Activated naive CD4-positive, alpha-beta T cell treated with anti-CD3 and anti-CD28 coated beads for 36 hours (primary cell): ENCODE measurements at regions of chr19 and their contacts with region 1.

Region 1: GRCh38 chr19:21396893-21397572 is at the start of gene ZNF493:
- DNase-seq: peak; percentile 97
- H3K4me3 Mint-ChIP-seq: peak within 1 kb of the TSS; percentile 96
- H3K27ac Mint-ChIP-seq: peak within 1 kb of the TSS; percentile 92
- H3K4me1 Mint-ChIP-seq: peaks cover 21% of the 10 kb centered on the region
- H3K27me3 Mint-ChIP-seq: no peaks in the 10 kb centered on the region
- total RNA-seq, gene ZNF493: 10.3 to 10.9 TPM

Region 2: DNA sequence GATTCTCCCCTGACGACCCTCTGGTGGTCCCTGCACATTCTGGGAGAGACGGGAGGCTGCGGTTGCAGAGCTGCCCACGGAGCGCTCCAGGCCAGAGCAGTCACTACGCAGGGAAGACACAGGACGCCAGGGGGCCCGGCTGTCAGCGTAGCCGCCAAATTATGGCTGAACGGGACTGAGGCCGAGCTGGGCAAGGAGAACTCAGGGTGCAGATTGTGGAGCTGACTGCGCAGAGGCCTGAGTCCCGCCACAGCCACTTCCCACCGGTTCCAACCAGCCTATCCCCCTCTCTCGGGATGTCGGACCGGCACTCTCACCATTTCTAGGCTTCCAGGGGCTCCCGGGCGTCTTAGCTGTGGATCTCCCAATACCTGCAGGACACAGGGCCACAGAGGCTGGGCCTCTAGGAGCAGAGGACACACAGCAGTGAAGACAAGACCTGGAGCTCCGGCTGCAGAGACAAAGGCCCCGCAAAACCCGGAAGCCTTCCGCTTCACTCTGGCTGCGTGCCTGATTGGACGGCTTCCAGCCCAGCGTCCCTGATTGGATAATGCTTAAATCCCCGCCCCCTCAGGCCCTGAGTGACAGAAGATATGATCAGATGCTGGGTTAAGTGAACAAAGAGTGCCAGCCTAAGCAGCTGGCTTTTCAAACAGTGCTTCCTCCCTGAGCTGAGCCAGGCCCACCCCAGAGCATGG is 831.6 kb before region 1 on chr19 and contains the start of gene ZNF737:
- CTCF ChIA-PET with region 1: no interaction called
- intact Hi-C with region 1: loop called (anchors 1 kb)
- DNase-seq: peak; percentile 96
- H3K4me3 Mint-ChIP-seq: peak within 1 kb of the TSS; percentile 94
- H3K27ac Mint-ChIP-seq: peak within 1 kb of the TSS; percentile 96
- H3K4me1 Mint-ChIP-seq: peaks cover 14% of the 10 kb centered on the region
- H3K27me3 Mint-ChIP-seq: no peaks in the 10 kb centered on the region
- total RNA-seq, gene ZNF737: 7.9 to 9.4 TPM

Region 3: GRCh38 chr19:20999731-21000352 is 397.2 kb before region 1 on chr19:
- CTCF ChIA-PET with region 1: no interaction called
- intact Hi-C with region 1: loop called (anchors 1 kb)
- DNase-seq: peak; percentile 96
- H3K4me3 Mint-ChIP-seq: peak overlapping the region; percentile 97
- H3K27ac Mint-ChIP-seq: peak overlapping the region; percentile 87
- H3K4me1 Mint-ChIP-seq: peaks cover 3% of the 10 kb centered on the region
- H3K27me3 Mint-ChIP-seq: no peaks in the 10 kb centered on the region

Region 4: DNA sequence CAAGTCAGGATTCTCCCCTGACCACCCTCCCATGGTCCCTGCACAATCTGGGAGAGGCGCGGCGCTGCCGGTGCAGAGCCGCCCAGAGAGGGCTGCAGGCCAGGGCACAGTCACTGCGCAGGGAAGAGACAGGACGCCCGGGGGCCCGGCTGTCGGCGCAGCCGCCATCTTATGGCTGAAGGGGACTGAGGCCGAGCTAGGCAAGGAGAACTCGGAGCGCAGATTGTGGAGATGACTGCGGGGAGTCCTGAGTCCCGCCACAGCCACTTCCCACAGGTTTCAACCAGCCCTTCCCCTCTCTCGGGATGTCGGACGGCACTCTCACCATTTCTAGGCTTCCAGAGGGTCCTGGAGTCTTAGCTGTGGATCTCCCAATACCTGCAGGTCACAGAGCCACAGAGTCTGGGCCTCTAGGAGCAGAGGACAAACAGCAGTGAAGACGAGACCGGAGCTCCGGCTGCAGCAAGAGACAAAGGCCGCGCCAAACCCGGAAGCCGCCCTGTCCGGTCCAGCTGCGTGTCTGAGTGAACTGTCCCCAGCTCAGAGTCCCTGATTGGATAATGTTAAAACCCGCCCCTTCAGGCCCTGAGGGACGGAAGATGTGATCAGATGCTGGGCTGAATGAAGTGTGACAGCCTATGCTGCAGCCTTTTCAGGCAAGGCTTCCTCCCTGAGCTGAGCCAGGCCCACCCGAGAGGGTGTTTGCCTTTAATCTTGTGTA is 68.0 kb before region 1 on chr19 and contains the start of gene ZNF708:
- CTCF ChIA-PET with region 1: no interaction called
- intact Hi-C with region 1: loop called (anchors 1 kb)
- DNase-seq: peak; percentile 90
- H3K4me3 Mint-ChIP-seq: peak within 1 kb of the TSS; percentile 98
- H3K27ac Mint-ChIP-seq: peak within 1 kb of the TSS; percentile 98
- H3K4me1 Mint-ChIP-seq: peaks cover 33% of the 10 kb centered on the region
- H3K27me3 Mint-ChIP-seq: no peaks in the 10 kb centered on the region
- total RNA-seq, gene ZNF708: 7.8 to 10.9 TPM

Region 5: GRCh38 chr19:21474671-21475181 is 77.7 kb after region 1 on chr19:
- CTCF ChIA-PET with region 1: no interaction called
- intact Hi-C with region 1: loop called (anchors 2 kb)
- DNase-seq: peak; percentile 93
- H3K4me3 Mint-ChIP-seq: peak overlapping the region; percentile 83
- H3K27ac Mint-ChIP-seq: no peak overlapping the region
- H3K4me1 Mint-ChIP-seq: peaks cover 4% of the 10 kb centered on the region
- H3K27me3 Mint-ChIP-seq: no peaks in the 10 kb centered on the region

Region 6: GRCh38 chr19:21677696-21678418 is 280.8 kb after region 1 on chr19:
- CTCF ChIA-PET with region 1: no interaction called
- intact Hi-C with region 1: no loop called
- DNase-seq: peak; percentile 37
- H3K4me3 Mint-ChIP-seq: peak overlapping the region; percentile 57
- H3K27ac Mint-ChIP-seq: no peak overlapping the region
- H3K4me1 Mint-ChIP-seq: peaks cover 6% of the 10 kb centered on the region
- H3K27me3 Mint-ChIP-seq: peaks cover 7% of the 10 kb centered on the region